AG04449 (cell line): ENCODE measurements at regions of chr1 and their contacts with region 1.

Region 1: DNA sequence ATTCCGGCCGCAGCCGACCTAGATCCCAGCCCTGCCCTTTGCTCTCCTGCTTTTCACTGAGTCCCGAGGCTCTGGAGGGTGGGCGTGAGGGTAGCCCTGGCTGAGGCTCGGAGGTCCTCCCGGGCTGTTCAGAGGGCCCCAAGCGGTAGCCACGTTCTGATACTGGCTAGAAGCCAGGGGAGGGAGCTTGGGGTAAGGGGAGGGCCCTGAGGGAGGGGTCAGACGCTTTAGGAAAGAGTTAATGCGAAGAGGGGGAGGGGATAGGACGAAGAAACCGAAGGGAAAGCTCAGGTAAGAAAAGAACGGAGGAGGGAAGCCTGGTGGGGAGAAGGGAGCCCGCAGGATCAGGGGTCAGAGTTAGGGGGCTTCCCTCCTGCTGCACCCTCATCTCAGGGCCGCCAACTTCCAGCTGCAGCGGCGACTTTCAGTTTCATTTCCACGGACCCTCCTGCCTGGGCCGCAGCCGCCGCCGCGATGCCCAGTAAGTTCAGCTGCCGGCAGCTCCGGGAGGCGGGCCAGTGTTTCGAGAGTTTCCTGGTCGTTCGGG is at the start of gene MOV10:
- DNase-seq: no peak
- H3K4me3 ChIP-seq: peak within 1 kb of the TSS; percentile 87
- CTCF ChIP-seq: no peak

Region 2: GRCh38 chr1:112700290-112701226 is 26.0 kb after region 1 on chr1:
- CTCF ChIA-PET with region 1: interaction called, 21 read pairs
- POLR2A ChIA-PET with region 1: interaction called, 21 read pairs
- DNase-seq: peak; percentile 74
- H3K4me3 ChIP-seq: peak overlapping the region; percentile 25
- CTCF ChIP-seq: peak; percentile 1

Region 3: DNA sequence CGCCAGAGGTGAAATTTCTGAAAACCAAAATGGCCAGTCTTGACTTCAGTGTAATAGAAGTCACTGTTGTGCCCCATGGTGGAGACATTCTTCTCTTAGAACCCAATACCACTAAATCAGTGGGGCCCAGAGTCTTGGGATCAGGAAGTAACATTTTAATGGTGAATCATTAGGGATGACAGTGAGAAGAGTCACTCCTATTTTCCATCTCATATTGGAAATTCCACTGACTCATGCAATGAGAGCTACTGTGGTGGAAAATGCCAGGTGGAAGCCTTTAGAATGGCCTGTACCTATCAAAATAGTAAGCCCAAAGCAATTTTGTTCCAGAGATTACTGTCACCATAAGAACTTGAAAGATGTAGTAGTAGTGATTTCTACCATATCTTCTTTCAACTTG is 61.2 kb after region 1 on chr1:
- CTCF ChIA-PET with region 1: no interaction called
- POLR2A ChIA-PET with region 1: no interaction called
- DNase-seq: no peak
- H3K4me3 ChIP-seq: no peak overlapping the region
- CTCF ChIP-seq: no peak

Region 4: DNA sequence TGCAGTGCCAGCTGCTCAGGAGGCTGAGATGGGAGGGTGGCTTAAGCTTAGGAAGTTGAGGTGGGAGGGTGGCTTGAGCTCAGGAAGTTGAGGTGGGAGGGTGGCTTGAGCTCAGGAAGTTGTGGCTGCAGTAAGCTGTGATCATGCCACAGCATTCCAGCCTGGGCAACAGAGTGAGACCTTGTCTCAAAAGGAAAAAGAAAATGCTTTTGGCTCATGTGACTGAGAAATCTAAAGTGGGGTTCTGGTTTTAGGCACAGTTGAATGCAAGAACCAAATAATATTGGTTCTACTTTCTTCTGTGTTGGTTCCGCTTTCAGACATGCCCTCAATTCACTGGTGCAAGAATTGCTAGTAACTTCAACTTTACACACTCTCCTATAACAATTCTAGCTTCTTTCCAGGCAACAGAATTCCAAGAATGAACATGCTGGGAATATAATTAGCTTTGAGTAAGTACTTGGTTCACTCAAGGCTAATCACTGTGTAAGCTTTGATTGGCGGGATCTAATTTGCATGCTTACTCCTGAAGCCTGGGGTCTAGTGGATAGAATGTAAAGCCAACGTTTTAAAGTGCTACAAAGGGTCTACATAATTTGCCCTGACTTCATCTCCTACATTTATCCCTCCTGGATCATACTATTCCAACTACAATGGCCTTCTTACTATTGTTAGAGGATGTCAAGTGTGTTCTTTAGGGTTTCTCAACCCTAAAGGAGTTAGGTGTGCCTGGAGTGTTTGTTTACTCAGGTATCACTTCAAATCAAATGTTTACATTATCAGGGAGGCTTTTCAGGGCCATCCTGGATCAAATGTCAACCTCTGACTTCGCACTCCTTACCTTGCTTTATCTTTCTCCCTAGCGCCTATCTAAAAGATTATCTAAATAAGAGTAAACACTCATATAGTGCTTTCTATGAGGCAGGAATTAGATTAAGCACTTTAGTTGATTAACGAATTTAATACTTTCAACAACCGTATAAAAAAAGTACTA is 166.4 kb after region 1 on chr1:
- CTCF ChIA-PET with region 1: no interaction called
- POLR2A ChIA-PET with region 1: no interaction called
- DNase-seq: no peak
- H3K4me3 ChIP-seq: no peak overlapping the region
- CTCF ChIP-seq: no peak